ENCODE measurements at regions of chr12 and their contacts with region 1.

Region 1: DNA sequence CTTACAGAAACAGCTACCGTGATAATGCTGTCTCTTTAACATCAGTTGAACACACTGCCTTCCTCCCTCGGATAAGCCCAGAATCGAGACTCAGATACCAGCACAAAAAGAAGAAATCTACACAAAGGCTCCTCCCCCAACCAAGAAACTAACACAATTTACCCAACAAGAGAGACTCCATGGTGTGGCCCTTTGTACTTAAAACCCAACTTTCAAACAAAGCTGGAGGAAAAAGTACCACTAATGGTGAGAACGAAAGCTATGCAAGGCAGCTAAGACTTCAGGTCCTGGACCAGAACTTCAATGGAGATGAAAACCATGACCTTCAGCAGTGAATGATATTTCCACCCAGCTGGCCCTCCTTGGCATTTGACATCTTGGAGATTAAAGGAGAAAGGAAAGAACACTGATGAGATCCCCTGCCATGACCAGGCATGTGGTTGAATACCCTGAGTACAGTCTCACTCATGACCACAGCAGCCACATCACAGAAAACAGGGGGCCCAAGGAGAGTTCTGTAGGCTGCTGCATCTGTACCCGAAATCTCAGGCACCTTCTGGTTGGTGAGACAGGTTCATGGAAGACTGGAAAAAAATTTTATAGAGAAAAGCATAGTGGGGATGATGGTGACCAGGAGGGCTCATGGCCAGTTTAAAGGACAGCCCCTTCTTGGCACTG is 36.7 kb downstream of the RBM19 start:
- DNase-seq: no peak
- H3K4me3 Mint-ChIP-seq: no peak overlapping the region
- H3K27ac Mint-ChIP-seq: no peak overlapping the region
- H3K4me1 Mint-ChIP-seq: peaks cover 21% of the 10 kb centered on the region
- H3K27me3 Mint-ChIP-seq: no peaks in the 10 kb centered on the region

Region 2: DNA sequence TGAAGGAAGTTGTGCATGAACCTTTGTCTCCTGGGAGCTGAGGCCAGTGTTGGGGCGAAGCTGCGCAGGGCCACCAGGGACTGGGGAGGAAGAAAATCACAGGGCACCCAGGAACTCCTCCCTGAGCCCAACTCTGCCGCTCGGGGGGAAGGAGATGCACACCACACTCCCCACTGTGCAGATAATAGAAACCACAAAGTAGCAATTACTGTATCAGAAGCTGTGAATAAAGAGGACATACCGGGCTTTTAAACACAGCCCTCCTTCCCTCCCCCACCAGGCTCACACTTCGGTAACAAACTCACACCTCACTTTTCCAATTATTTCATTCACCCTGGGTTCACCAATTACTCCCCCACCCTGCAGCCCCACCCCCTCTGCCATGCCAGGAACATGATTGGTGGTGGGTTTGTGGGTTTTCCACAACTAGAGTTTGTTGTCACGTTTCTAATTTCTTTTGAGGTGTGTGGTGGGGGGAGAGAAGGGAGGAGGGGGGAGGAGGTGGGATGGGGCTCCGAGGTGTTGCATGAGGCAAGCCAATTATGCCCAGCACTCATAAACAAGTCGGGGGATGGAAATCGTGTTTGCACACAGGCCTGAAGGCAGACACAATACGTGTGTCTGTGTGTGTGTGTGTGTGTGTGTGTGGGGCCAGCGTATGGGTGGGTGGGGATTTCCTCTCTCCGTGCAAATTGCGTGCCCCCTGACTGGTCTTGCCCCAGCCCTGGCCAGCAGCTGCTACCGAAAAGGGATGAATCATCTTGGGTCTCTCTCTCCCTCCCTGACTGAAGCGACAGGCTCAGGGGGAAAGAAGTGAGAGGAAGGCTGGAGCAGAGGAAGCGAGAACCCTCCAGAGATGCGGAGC is 66.6 kb before region 1 on chr12:
- intact Hi-C with region 1: loop called (anchors 1 kb)
- DNase-seq: no peak
- H3K4me3 Mint-ChIP-seq: no peak overlapping the region
- H3K27ac Mint-ChIP-seq: no peak overlapping the region
- H3K4me1 Mint-ChIP-seq: peaks cover 12% of the 10 kb centered on the region
- H3K27me3 Mint-ChIP-seq: no peaks in the 10 kb centered on the region